HepG2 (cell line): ENCODE measurements at regions of chr7 and their contacts with region 1.

Region 1: DNA sequence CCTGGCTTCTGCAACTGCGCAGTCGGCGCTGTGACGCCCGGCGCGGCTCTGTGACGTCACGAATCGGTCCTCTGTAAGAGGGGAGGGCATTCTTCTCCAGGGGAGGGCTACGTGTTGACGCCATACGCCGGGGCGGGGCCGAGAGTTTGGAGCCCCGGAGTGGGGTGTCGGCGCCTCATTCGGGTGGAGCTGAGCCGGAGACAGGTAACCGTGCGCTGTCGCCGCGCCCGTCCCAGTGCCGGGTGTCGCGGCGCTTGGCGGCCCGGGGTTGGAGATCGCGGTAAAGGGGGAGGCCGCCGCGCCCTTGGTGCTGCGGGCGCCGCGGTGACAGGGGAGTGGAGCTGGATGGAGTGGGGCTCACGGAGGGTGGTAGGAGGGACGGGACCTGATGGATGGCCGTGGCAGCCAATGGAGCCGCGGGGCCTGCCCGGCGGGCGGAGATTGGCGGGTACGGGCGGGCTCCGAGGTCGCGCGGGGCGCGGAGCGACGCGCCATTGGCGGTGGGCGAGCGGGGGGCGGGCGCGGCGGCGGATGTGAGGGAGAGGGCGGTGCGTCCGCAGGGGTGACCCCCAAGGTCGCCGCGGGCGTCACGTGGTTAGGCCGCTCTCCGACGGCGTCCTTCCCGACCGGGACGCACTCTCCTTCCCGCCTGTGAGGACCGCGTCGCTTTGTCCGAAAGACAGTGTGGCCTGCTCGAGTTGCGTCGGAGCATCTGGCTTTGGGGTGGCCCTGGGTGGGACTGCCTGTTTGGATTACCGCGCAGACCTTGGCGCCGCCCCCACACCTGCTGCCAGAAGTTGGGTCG is at the start of gene OGDH:
- DNase-seq: peak; percentile 93
- ATAC-seq: peak; percentile 99
- H3K4me3 ChIP-seq: peak within 1 kb of the TSS; percentile 84 to 94 (median 89)
- H3K27ac ChIP-seq: peak within 1 kb of the TSS; percentile 90
- H3K4me1 ChIP-seq: peaks cover 23% of the 10 kb centered on the region
- H3K27me3 ChIP-seq: no peaks in the 10 kb centered on the region; a peak in 1 of 5 replicates
- CTCF ChIP-seq: no peak
- EP300 ChIP-seq: 0 out of 4 replicates have a peak, but pooled peaks of 1 of the 2 experiments have one; percentile 19
- POLR2A ChIP-seq: peak; percentile 80 to 90
- RAD21 ChIP-seq: peak; percentile 11; the same call in 1 of the 2 replicates
- total RNA-seq, gene OGDH: 25.4 and 28.1 TPM in 2 replicates

Region 2: GRCh38 chr7:44573464-44574286 is 33.0 kb before region 1 on chr7 and contains the start of gene DDX56:
- CTCF ChIA-PET with region 1: no interaction called
- POLR2A ChIA-PET with region 1: interaction called, 13 read pairs
- in situ Hi-C with region 1: no loop called
- intact Hi-C with region 1: no loop called
- DNase-seq: peak; percentile 96
- ATAC-seq: peak; percentile 97
- H3K4me3 ChIP-seq: peak within 1 kb of the TSS; percentile 77 to 91 (median 83)
- H3K27ac ChIP-seq: peak within 1 kb of the TSS; percentile 83
- H3K4me1 ChIP-seq: peaks cover 39% of the 10 kb centered on the region
- H3K27me3 ChIP-seq: no peaks in the 10 kb centered on the region; a peak in 1 of 5 replicates
- CTCF ChIP-seq: no peak; the same call in 1 of the 2 replicates
- EP300 ChIP-seq: no peak
- POLR2A ChIP-seq: peak in 1 of 2 experiments; percentile 86; a peak in 2 of 4 replicates
- RAD21 ChIP-seq: peak; percentile 54
- total RNA-seq, gene DDX56: 105 and 120 TPM in 2 replicates

Region 3: GRCh38 chr7:44621020-44621722 is 14.5 kb after region 1 on chr7:
- CTCF ChIA-PET with region 1: no interaction called
- POLR2A ChIA-PET with region 1: interaction called, 11 read pairs
- in situ Hi-C with region 1: no loop called
- intact Hi-C with region 1: no loop called
- DNase-seq: no peak
- ATAC-seq: no peak
- H3K4me3 ChIP-seq: no peak overlapping the region
- H3K27ac ChIP-seq: no peak overlapping the region
- H3K4me1 ChIP-seq: peaks cover 25% of the 10 kb centered on the region
- H3K27me3 ChIP-seq: no peaks in the 10 kb centered on the region
- CTCF ChIP-seq: no peak
- EP300 ChIP-seq: no peak
- POLR2A ChIP-seq: no peak
- RAD21 ChIP-seq: no peak

Region 4: DNA sequence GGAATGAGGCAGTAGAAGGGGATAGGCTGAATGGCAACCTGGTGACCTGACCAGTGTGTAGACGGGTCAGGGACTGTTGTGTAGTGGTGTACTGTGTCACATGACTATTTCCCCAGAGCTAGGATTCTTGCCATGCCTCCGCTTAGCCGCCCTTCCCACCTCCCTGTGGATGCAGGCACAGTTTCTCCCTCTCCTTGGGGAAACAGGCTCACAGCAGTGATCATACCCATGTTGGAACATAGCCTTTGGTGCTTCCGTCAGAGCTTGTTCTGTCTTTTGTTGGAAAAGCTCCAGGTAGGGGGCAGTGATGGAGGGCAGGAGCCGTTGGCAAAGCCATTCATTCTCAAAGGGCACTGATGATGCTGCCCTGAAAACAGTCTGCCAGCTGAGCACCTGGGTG is 44.1 kb after region 1 on chr7:
- CTCF ChIA-PET with region 1: no interaction called
- POLR2A ChIA-PET with region 1: no interaction called
- in situ Hi-C with region 1: no loop called
- intact Hi-C with region 1: no loop called
- DNase-seq: no peak
- ATAC-seq: no peak
- H3K4me3 ChIP-seq: no peak overlapping the region
- H3K27ac ChIP-seq: no peak overlapping the region
- H3K4me1 ChIP-seq: no peaks in the 10 kb centered on the region
- H3K27me3 ChIP-seq: no peaks in the 10 kb centered on the region
- CTCF ChIP-seq: no peak
- EP300 ChIP-seq: no peak
- POLR2A ChIP-seq: no peak
- RAD21 ChIP-seq: no peak

Region 5: GRCh38 chr7:44678471-44679179 is 72.0 kb after region 1 on chr7:
- CTCF ChIA-PET with region 1: no interaction called
- POLR2A ChIA-PET with region 1: interaction called, 6 read pairs
- in situ Hi-C with region 1: no loop called
- intact Hi-C with region 1: loop called (anchors 1 kb)
- DNase-seq: peak; percentile 83
- ATAC-seq: peak; percentile 87
- H3K4me3 ChIP-seq: no peak overlapping the region
- H3K27ac ChIP-seq: peak overlapping the region; percentile 67
- H3K4me1 ChIP-seq: peaks cover 27% of the 10 kb centered on the region
- H3K27me3 ChIP-seq: no peaks in the 10 kb centered on the region
- CTCF ChIP-seq: no peak
- EP300 ChIP-seq: peak; percentile 35 to 57; a peak in 3 of 4 replicates
- POLR2A ChIP-seq: peak in 1 of 2 experiments; percentile 47; a peak in 1 of 4 replicates
- RAD21 ChIP-seq: no peak

Region 6: DNA sequence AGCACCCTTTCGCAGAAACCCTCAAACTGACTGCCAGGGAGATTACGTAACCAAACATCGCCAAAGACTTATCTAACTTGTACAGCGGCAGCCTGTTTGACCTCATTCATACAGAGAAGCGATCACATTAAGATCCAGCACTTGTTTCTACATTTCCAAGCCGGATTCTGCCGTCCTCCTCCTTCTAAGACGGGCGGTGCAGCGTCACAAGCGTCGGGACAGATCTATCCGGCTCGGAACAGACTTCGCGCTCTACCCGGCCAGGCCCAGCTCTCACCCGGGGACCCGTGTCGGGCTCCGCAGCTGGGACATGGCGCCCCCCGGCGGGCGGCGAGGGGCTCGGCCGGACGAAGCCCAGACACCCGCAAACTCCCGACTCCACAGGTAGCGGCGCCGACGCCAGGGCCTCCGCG is 240.9 kb after region 1 on chr7:
- CTCF ChIA-PET with region 1: no interaction called
- POLR2A ChIA-PET with region 1: interaction called, 13 read pairs
- in situ Hi-C with region 1: no loop called
- intact Hi-C with region 1: no loop called
- DNase-seq: peak; percentile 69
- ATAC-seq: peak; percentile 83
- H3K4me3 ChIP-seq: peak overlapping the region; percentile 64 to 92 (median 85)
- H3K27ac ChIP-seq: peak overlapping the region; percentile 83
- H3K4me1 ChIP-seq: peaks cover 40% of the 10 kb centered on the region
- H3K27me3 ChIP-seq: no peaks in the 10 kb centered on the region; a peak in 1 of 5 replicates
- CTCF ChIP-seq: peak; percentile 87
- EP300 ChIP-seq: 0 out of 4 replicates have a peak, but pooled peaks of 1 of the 2 experiments have one; percentile 1
- POLR2A ChIP-seq: no peak; a peak in 1 of 4 replicates
- RAD21 ChIP-seq: peak; percentile 97